ENCODE measurements at regions of chr1 and their contacts with region 1.

Region 1: DNA sequence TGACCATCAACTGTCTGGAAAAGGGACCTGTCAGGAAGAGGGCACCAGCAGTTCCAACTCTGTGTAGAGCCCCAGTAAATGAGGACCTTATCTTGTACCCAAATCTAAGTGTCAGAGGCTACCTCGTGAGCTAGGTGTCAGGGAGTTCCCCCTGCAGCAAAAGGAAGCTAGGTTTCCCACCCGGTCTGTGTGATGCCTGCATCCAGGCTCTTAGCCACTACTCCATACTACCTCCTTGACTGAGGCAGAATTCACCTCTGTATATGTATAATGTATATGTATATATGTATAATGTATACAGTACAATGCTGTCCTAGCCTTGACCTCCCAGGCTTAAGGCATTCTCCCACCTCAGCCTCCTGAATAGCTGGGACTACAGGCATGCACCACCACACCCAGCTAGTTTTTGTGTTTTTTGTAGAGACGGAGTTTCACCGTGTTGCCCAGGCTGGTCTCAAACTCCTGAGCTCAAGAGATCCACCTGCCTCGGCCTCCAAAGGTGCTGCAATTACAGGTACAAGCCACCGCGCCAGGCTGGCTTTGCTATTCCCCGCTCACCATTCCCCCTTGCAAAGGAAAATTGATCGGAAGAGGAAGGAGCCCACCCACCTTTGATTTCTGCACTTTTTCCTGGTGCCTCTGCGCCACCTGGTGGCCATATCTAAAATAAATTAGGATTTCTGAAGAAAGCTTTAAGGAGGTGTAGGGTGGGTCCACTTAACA is 15.7 kb upstream of the LUZP1 start:
- DNase-seq: peak; percentile 47
- ATAC-seq: no peak
- H3K4me3 Mint-ChIP-seq: peak overlapping the region; percentile 32
- H3K27ac Mint-ChIP-seq: no peak overlapping the region
- H3K4me1 Mint-ChIP-seq: peaks cover 5% of the 10 kb centered on the region
- H3K27me3 Mint-ChIP-seq: peaks cover 28% of the 10 kb centered on the region

Region 2: DNA sequence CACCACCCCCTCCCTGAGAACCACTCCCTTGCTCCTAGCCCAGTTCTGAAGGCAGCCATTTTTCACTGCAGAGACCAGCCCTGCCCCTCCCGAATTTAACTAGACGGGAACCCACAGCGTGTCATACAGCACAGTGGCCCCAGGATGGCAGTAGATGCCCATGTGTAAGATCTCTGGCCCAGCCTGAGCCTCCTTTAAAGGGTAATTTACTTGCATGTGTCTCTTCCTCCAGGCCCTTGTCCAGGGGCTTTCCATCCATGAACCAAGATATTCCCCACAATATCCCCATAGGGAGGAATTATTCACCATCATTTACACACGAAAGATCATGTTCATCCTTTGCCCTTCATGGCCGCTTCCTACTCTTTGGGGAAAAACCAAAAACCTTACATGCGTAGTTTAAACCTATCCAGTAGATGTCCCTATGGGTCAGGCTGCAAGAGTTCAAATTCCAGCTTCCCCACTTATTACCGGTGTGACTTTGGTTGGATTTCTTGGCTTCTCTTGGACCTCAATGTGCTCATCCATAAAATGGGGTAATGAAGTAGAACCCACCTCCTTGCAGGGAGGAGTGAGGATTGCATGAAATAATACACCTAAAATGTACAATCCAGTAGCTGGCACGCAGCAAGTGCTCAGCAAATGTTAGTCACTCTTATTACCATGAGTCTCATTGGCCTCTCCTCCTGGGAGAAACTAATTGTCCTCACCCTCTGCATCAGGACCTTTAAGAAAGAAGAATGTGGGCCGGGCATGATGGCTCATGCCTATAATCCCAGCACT is 207.7 kb before region 1 on chr1:
- CTCF ChIA-PET with region 1: interaction called, 25 read pairs
- POLR2A ChIA-PET with region 1: no interaction called
- DNase-seq: peak; percentile 70
- ATAC-seq: peak; percentile 89
- H3K4me3 Mint-ChIP-seq: no peak overlapping the region
- H3K27ac Mint-ChIP-seq: no peak overlapping the region
- H3K4me1 Mint-ChIP-seq: no peaks in the 10 kb centered on the region
- H3K27me3 Mint-ChIP-seq: peaks cover 16% of the 10 kb centered on the region

Region 3: GRCh38 chr1:23004112-23004511 is 180.3 kb before region 1 on chr1:
- CTCF ChIA-PET with region 1: no interaction called
- POLR2A ChIA-PET with region 1: no interaction called
- DNase-seq: no peak
- ATAC-seq: no peak
- H3K4me3 Mint-ChIP-seq: no peak overlapping the region
- H3K27ac Mint-ChIP-seq: no peak overlapping the region
- H3K4me1 Mint-ChIP-seq: no peaks in the 10 kb centered on the region
- H3K27me3 Mint-ChIP-seq: peaks cover 11% of the 10 kb centered on the region

Region 4: DNA sequence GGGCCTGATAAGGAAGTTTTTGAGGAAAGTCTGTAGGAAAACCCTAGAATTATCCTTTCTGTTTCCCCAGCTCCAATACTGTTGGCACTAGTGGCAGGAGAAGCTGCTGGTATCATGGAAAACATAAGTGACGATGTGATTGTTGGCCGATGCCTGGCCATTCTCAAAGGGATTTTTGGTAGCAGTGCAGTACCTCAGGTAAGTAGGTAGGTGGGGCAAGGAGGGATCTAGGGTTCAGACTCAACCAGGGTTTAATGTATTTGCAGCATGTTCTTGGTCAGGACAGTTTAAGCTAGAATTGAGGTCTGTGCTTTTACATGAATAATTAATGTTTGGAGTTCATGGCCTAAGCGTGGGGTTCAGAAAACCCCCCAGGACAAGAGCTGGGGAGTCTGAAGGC is 103.0 kb before region 1 on chr1:
- CTCF ChIA-PET with region 1: interaction called, 24 read pairs
- POLR2A ChIA-PET with region 1: no interaction called
- DNase-seq: no peak
- ATAC-seq: no peak
- H3K4me3 Mint-ChIP-seq: no peak overlapping the region
- H3K27ac Mint-ChIP-seq: no peak overlapping the region
- H3K4me1 Mint-ChIP-seq: no peaks in the 10 kb centered on the region
- H3K27me3 Mint-ChIP-seq: no peaks in the 10 kb centered on the region

Region 5: DNA sequence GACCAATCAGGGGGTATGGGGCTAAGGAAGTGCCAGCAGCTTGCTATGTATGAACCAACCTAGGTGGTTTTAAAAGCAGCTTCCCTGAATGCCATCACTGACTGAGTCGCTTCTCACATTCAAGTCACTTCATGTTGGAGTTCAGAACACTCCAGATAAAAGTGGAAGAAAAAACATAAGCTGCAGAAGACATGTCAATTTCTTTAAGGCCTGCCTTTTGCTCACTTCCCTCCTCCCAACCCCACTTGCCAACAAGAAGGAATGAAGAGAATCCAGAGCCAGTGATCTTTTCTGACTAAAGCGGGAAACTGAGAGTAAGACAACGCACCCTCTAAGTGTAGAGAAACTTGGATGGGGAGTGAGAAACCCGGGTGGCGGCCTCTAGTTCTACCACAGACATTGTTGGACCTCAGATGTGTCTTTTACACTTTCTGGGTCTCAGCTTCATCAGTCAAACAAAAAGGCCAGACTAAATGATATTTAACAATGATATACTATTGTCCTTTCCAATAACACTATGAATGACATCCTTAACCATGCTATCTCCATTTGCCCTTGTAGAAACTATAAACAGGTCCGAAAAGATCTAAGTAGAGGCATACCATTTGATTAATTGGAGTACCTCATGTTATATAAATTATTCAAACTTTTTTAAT is 69.8 kb before region 1 on chr1:
- CTCF ChIA-PET with region 1: interaction called, 82 read pairs
- POLR2A ChIA-PET with region 1: interaction called, 3 read pairs
- DNase-seq: no peak
- ATAC-seq: no peak
- H3K4me3 Mint-ChIP-seq: no peak overlapping the region
- H3K27ac Mint-ChIP-seq: no peak overlapping the region
- H3K4me1 Mint-ChIP-seq: peaks cover 74% of the 10 kb centered on the region
- H3K27me3 Mint-ChIP-seq: peaks cover 2% of the 10 kb centered on the region

Region 6: GRCh38 chr1:23132033-23132432 is 52.3 kb before region 1 on chr1:
- CTCF ChIA-PET with region 1: interaction called, 14 read pairs
- POLR2A ChIA-PET with region 1: no interaction called
- DNase-seq: no peak
- ATAC-seq: no peak
- H3K4me3 Mint-ChIP-seq: no peak overlapping the region
- H3K27ac Mint-ChIP-seq: no peak overlapping the region
- H3K4me1 Mint-ChIP-seq: no peaks in the 10 kb centered on the region
- H3K27me3 Mint-ChIP-seq: no peaks in the 10 kb centered on the region

Region 7: DNA sequence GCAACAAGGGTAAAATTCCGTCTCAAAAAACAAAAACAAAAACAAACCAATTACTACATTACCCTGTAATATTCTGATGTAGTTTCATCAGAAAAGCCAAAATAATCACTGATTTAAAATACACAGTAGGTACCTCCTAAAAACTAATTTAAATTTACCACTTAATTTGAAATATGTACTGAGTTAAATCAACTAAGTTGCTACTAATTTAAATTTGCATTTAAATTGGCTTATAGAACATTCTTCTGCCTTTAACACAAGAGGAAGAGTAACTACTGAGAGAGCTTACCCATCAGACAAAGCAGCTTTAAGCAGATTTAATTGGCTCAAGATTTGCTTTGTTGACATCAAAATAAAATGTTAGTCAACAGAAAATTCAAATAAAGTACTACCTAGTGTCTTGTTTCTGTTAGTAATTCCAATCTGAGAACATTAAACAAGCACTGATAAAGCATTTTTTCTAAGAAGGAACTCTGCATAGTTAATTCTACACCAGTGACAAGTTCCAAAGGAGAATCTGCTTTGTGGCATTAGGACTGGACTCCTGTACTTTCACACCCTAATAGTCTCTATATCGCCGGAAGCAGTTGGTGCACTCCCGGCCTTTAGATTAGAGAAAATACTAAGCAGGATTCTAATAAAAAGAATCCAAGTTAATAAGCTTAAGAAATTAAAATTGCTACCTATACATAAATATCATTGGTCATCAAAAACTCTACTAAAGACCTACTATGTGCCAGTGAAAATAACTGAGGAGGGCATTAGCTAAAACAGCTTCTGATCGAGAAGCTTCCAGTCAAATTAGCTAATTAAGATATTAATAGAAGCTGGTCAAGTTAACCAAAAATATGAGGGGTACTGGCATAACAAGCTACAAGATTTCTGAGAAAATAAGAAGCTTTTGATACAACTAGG is 24.2 kb before region 1 on chr1:
- CTCF ChIA-PET with region 1: interaction called, 48 read pairs
- POLR2A ChIA-PET with region 1: no interaction called
- DNase-seq: no peak
- ATAC-seq: no peak
- H3K4me3 Mint-ChIP-seq: no peak overlapping the region
- H3K27ac Mint-ChIP-seq: no peak overlapping the region
- H3K4me1 Mint-ChIP-seq: peaks cover 2% of the 10 kb centered on the region
- H3K27me3 Mint-ChIP-seq: no peaks in the 10 kb centered on the region

Region 8: DNA sequence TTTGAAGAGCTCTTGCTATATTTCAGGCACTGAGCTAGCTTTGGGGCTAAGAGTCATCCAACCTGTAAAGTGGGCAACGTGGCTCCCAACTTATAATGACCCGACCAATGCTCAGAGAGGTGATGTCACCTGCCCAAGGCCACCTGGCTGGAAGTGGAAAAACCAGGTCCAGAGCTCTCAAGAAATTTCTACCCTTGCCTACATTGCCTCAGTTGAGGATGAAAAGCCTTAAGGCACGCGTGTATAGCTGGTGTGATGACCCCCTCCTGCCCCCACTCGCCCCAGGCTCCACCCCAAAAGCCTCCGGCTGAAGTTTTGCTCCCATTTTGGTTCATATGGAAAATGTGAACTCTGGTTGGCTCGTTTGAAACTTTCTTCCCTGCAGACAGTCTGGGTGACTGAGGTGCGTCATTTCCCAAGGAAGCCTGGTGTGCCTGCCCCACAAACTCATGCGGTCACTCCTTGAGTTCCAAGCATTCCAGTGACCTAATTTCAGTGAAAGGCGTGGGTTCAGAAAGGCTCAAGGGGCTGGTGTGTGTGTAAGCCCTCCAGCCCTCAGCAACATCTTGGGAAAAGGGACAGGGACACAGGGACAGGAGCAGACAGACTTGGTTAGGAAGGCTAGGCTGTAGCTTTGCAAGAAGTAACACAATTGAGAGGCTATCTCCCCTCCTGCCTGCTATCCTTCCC is 12.4 kb after region 1 on chr1:
- CTCF ChIA-PET with region 1: interaction called, 38 read pairs
- POLR2A ChIA-PET with region 1: no interaction called
- DNase-seq: no peak
- ATAC-seq: no peak
- H3K4me3 Mint-ChIP-seq: no peak overlapping the region
- H3K27ac Mint-ChIP-seq: no peak overlapping the region
- H3K4me1 Mint-ChIP-seq: no peaks in the 10 kb centered on the region
- H3K27me3 Mint-ChIP-seq: peaks cover 6% of the 10 kb centered on the region

Region 9: DNA sequence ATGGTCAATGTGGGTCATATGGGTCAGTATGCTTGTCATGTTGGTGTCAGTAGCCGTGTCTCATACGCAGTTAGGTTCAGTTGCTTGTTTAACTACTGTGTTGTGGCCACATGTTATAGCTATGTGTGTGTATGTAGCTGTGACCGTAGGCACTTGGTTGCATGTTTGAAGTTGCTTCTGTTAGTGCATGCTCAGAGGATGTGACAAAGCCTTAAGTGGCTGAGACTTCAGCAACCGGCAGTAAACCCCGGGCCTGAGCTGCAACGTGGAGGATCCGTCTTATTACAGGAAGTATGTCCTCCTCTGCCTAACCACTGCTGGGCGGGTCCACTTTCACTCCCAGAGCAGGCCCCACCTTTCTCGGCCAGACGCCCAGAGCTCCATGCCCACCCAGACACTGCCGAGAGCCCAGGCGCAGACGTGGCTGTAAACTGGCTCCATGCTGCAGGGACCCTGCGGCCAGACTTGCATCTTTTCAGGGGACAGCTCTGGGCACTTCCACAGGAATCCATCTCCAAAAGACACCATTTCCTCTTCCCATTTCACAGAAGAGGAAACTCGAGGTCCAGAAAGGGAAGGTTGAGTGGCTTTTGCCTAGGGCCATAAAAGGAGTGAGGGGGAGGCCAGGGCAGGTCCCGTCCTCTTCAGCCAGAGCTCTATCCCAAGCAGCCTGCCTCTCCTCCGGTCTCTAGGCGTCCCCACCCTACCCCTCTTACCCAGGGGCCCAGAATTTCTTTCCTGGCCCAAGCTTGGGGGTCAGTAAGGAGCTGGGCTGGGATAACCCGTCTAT is 238.1 kb after region 1 on chr1:
- CTCF ChIA-PET with region 1: no interaction called
- POLR2A ChIA-PET with region 1: no interaction called
- DNase-seq: peak; percentile 83
- ATAC-seq: peak; percentile 84
- H3K4me3 Mint-ChIP-seq: peak overlapping the region; percentile 78
- H3K27ac Mint-ChIP-seq: peak overlapping the region; percentile 74
- H3K4me1 Mint-ChIP-seq: peaks cover 39% of the 10 kb centered on the region
- H3K27me3 Mint-ChIP-seq: peaks cover 25% of the 10 kb centered on the region